Activated T-helper 2 cell treated with anti-CD3 and anti-CD28 coated beads, Interferon-gamma antibody, Interleukin-2, Interleukin-4, amounts not matched to agents 10 μg/mL and 5 μg/mL and 100 μg/mL, durations not matched to agents 14 hours and 24 hours and 36 hours (primary cell): ENCODE measurements at regions of chr1 and their contacts with region 1.

Region 1: DNA sequence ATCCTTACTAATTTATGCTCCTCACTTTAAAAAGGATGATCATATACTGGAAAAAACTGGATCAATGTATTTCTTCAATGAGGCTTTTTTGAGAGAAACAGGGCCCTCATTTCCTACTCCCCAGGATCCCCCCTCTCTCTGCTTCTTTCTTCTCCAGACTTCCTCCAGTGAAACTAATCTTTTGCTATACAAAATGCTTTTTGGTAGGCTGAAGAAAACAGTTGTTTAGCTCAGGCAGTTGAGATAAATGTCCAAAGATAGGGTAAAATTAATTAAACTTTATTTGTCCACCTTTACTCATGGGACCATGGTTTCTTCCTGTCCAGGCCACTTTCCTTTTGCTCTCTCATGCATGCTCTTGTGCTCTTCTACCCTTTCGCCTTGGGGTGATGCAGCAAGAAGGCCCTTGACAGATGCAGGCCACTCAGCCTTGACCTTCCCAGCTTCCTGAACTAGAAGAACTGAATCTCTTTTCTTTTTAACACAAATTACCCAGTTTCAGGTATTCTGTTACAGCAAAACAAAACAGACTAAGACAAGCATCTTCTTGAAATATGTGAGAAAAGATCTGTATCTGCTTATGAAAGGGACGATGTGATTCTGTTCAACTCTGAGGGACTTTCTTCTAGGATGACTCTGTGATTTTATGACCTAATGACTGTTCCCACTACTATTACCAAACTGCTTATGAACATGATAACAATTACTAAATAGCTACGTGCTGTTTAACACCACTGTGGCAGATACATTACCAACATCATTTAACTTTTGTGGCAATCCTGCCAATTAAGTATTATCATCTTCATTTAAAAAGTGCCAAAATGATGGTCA is 63.7 kb downstream of the NVL start:
- DNase-seq: no peak
- H3K4me3 Mint-ChIP-seq: peak overlapping the region; percentile 3
- H3K27ac Mint-ChIP-seq: peak overlapping the region; percentile 82
- H3K4me1 Mint-ChIP-seq: peaks cover 38% of the 10 kb centered on the region
- H3K27me3 Mint-ChIP-seq: no peaks in the 10 kb centered on the region

Region 2: DNA sequence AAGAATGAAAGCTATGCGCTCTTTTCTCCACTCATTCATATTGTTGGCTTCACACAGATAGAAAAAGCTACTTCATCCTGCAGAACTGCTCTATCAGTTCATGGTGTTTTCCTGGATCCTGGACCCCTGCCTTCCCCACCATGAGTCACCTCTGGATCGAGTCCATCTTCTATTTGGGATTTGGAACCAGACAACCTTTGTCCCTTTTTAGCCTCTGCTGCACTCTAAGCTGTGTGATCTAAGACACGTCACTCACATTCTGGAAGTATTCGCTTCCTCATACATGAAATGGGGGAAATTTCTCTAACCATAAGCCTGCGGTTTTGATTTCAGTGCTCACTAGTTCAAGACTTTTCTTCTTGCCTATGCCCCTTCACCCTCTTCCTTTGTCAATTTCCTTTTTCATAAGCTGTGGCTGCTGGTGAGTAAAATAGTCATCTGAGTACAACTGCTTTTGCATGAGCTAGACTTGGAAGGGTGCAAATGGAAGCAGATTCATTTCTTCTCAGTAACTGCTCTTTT is 97.4 kb before region 1 on chr1:
- intact Hi-C with region 1: loop called (anchors 1 kb)
- DNase-seq: peak; percentile 37
- H3K4me3 Mint-ChIP-seq: peak overlapping the region; percentile 50
- H3K27ac Mint-ChIP-seq: peak overlapping the region; percentile 83
- H3K4me1 Mint-ChIP-seq: peaks cover 36% of the 10 kb centered on the region
- H3K27me3 Mint-ChIP-seq: peaks cover 7% of the 10 kb centered on the region

Region 3: DNA sequence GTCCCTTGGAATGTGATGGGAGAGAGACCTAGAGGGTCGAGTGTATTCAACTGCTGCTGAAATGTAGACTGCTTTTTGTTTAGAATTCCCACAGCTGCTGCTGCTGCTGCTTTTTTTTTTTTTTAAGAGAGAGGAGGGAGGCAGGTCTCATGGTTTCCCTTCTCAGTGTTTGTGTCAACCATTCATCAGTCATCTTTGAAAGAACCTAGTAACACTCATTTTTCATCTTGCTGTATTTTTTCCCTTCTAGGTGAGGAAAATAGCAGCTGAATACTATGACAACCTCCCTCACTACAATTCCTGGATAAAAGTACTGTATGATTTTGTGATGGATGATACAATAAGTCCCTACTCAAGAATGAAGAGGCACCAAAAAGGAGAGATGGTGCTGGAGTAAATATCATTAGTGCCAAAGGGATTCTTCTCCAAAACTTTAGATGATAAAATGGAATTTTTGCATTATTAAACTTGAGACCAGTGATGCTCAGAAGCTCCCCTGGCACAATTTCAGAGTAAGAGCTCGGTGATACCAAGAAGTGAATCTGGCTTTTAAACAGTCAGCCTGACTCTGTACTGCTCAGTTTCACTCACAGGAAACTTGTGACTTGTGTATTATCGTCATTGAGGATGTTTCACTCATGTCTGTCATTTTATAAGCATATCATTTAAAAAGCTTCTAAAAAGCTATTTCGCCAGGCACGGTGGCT is 74.1 kb before region 1 on chr1:
- intact Hi-C with region 1: loop called (anchors 1 kb)
- DNase-seq: no peak
- H3K4me3 Mint-ChIP-seq: peak overlapping the region; percentile 13
- H3K27ac Mint-ChIP-seq: peak overlapping the region; percentile 89
- H3K4me1 Mint-ChIP-seq: peaks cover 27% of the 10 kb centered on the region
- H3K27me3 Mint-ChIP-seq: no peaks in the 10 kb centered on the region

Region 4: DNA sequence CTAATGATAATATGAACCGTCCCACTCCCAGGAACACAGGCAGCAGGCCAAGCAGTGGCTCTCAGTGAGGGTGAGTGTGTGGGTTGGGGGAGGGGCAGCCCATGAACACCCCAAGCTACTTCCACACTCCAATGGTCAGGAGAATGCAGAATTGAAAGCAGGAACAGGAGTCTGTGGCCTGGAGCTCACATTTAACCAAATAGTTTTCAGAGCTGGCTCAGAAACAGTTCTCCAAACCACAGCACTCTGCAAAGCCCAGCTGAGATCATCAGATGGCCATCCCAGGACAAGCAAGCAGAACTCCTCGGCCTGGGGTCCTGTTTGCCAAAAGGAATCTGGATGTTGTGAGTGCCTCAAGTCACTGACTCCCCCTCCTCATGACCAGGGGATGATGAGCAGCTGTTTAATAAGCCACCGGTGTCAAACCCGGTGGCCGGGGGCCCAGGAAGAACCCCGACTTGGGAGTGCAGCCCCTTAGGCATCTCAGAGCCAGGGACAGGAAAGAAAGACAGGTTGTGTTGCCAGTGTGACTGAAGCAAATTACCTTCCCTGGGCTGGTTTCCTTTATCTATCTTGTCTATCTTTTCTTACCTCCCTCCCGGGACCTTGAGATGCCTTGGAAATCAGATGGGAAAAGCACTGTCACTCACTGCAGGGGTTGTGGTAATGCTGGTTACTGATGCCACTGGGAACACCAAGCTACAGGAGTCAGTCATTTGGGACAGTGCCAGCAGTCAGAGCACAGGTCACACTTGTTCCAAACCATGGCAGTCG is 62.9 kb before region 1 on chr1:
- intact Hi-C with region 1: loop called (anchors 1 kb)
- DNase-seq: no peak
- H3K4me3 Mint-ChIP-seq: no peak overlapping the region
- H3K27ac Mint-ChIP-seq: no peak overlapping the region
- H3K4me1 Mint-ChIP-seq: peaks cover 13% of the 10 kb centered on the region
- H3K27me3 Mint-ChIP-seq: no peaks in the 10 kb centered on the region